PC-9 (cell line): ENCODE measurements at regions of chr17 and their contacts with region 1.

Region 1: GRCh38 chr17:14753383-14753782 is 452.5 kb downstream of the HS3ST3B1 start:
- DNase-seq: no peak
- H3K4me3 ChIP-seq: no peak overlapping the region
- H3K27ac ChIP-seq: no peak overlapping the region
- H3K4me1 ChIP-seq: no peaks in the 10 kb centered on the region
- H3K27me3 ChIP-seq: no peaks in the 10 kb centered on the region
- CTCF ChIP-seq: no peak

Region 2: GRCh38 chr17:14505606-14506005 is 247.8 kb before region 1 on chr17:
- CTCF ChIA-PET with region 1: no interaction called
- POLR2A ChIA-PET with region 1: no interaction called
- intact Hi-C with region 1: no loop called
- DNase-seq: no peak
- H3K4me3 ChIP-seq: no peak overlapping the region
- H3K27ac ChIP-seq: no peak overlapping the region
- H3K4me1 ChIP-seq: no peaks in the 10 kb centered on the region
- H3K27me3 ChIP-seq: no peaks in the 10 kb centered on the region
- CTCF ChIP-seq: no peak

Region 3: GRCh38 chr17:14672830-14673229 is 80.6 kb before region 1 on chr17:
- CTCF ChIA-PET with region 1: no interaction called
- POLR2A ChIA-PET with region 1: interaction called, 20 read pairs
- intact Hi-C with region 1: no loop called
- DNase-seq: no peak
- H3K4me3 ChIP-seq: no peak overlapping the region
- H3K27ac ChIP-seq: no peak overlapping the region
- H3K4me1 ChIP-seq: no peaks in the 10 kb centered on the region
- H3K27me3 ChIP-seq: 0 out of 2 replicates have a peak, but pooled peaks cover 5% of the 10 kb centered on the region
- CTCF ChIP-seq: no peak

Region 4: DNA sequence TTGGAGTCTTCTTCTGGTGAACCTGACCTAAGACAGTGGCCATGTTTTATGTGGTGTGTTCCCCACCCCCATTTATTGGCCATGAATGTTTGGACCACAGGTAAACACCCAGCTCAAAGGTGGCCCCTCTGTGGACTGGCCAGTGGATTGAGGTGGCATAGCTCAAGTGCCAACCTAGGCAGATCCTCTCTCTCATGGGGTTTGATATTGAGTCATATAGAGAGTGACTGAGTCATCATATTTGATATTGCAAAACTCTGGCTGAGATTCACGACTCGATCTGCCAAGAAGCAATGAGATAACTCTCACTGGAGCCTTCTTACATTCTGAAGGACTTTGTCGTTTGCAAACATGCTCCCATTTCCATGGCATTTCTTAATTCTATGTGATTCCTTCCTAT is 598.5 kb after region 1 on chr17:
- CTCF ChIA-PET with region 1: no interaction called
- POLR2A ChIA-PET with region 1: no interaction called
- intact Hi-C with region 1: no loop called
- DNase-seq: peak in 1 of 2 experiments; percentile 43
- H3K4me3 ChIP-seq: no peak overlapping the region
- H3K27ac ChIP-seq: no peak overlapping the region
- H3K4me1 ChIP-seq: no peaks in the 10 kb centered on the region
- H3K27me3 ChIP-seq: peaks cover 13% of the 10 kb centered on the region; the same call in 1 of the 2 replicates
- CTCF ChIP-seq: no peak